Activated B cell treated with CpG ODN at 0.5 μM for 24 hours (primary cell): ENCODE measurements at regions of chr12 and their contacts with region 1.

Region 1: GRCh38 chr12:79908366-79908765 is 26.5 kb downstream of the PPP1R12A start:
- DNase-seq: no peak
- ATAC-seq: no peak
- H3K4me3 Mint-ChIP-seq: no peak overlapping the region
- H3K27ac Mint-ChIP-seq: peak overlapping the region; percentile 12
- H3K4me1 Mint-ChIP-seq: peaks cover 53% of the 10 kb centered on the region
- H3K27me3 Mint-ChIP-seq: no peaks in the 10 kb centered on the region
- CTCF ChIP-seq: no peak

Region 2: GRCh38 chr12:79895071-79895470 is 13.3 kb before region 1 on chr12:
- CTCF ChIA-PET with region 1: no interaction called
- POLR2A ChIA-PET with region 1: no interaction called
- intact Hi-C with region 1: loop called (anchors 2 kb)
- DNase-seq: no peak
- ATAC-seq: no peak
- H3K4me3 Mint-ChIP-seq: no peak overlapping the region
- H3K27ac Mint-ChIP-seq: no peak overlapping the region
- H3K4me1 Mint-ChIP-seq: peaks cover 55% of the 10 kb centered on the region
- H3K27me3 Mint-ChIP-seq: no peaks in the 10 kb centered on the region
- CTCF ChIP-seq: no peak